ENCODE measurements at regions of chr17 and their contacts with region 1.

Region 1: DNA sequence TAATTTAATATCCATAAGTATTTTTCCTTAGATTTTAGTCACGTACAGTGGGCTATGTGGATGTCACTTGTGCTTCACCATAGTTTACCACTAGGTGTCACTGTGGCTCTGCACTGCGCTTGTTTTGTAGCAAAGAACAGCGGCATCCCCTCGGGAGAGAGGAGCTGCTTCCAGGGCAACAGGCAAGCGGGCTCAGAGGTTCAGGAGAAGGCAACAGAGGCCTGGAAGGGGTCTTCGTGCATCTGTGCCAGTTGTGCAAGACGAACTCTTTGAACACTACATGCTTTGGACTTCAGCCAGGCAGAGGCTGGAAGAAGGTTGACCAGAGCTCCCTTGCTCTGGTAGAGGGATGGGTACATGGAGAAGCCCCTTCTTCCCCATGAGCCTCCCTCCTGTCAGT is 20.6 kb downstream of the CYB561 start:
- DNase-seq: peak; percentile 75
- ATAC-seq: peak; percentile 91

Region 2: DNA sequence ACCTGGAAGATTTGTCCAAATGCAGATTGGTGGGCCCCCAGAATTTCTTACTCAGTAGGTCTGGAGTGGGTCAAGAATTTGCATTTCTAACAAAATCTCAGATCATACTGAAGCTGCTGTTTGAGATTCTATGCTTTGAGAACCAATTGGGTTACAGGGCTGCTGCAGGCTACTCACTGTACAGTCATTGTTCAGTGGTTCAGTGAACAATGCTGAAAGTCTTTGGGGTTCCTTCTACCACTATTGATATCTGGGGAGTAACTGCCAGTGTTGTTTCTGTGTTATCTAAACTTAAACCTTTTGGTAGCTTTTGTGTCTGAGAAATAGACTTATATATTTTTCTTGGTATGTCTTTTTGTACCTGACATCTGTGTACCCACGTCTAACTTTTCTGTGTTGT is 272.0 kb before region 1 on chr17:
- intact Hi-C with region 1: no loop called
- DNase-seq: no peak
- ATAC-seq: no peak

Region 3: DNA sequence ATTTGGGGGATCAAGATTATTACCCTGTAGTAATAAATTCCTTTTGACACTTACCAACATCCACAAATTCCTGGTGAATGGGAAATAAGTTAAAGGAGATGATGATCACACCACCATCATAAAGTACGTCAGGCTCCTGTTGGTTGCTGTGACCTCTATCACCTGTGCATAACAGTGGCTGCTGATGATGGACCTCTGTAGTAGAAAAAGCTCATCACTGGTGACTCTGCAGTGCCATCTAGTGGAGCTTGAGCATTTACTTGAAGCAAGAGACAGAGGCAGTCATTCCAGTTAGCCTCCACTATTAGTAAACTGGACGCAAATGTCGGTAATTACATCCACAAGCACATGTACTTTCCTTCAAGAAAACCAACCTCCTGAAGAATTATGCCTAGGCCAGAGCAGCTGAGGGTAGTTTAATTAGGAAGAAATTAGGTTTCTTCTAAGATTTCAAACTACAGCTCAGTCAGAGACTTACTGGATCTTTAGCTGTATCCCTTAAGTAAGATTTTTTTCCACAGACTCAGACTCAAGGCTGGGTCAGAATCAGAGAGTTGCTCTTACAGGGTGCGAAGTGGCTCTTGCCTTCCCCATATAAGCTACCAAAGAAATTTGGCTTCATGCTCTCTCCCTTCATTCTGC is 18.7 kb before region 1 on chr17:
- intact Hi-C with region 1: no loop called
- DNase-seq: no peak
- ATAC-seq: peak; percentile 84

Region 4: GRCh38 chr17:63445065-63445978 is 19.8 kb after region 1 on chr17:
- intact Hi-C with region 1: no loop called
- DNase-seq: peak; percentile 40
- ATAC-seq: no peak

Region 5: DNA sequence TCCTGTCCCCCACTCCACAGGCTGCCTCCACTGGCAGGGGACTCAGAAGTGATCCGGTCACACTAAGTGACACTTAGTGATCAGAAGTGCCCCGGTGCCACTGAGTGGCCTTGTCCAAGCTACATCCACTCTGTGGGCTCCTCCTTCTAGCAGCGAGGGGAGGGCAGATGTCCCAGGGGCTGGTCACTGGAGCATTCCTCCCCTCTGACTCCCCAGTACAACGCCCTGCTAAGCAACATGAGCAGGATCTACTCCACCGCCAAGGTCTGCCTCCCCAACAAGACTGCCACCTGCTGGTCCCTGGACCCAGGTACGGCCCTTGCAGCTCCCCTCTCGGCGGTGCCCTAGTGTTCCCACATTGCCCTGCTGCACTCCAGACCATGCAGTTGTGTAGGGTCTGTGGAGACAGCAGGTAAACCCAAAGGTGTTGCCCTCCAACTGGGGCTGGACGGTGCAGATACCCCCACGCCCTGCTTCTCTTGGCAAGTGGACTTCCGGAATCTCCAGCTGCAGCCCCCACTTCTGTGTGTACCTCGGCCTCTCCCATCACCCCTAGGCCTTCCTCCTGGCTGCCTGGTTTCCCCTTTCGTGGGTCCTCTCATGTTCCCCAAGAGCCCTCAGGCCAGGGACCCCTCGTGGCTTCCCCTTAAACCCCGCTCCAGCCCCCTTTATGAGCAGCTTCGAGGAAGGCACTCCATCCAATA is 53.5 kb after region 1 on chr17:
- intact Hi-C with region 1: loop called (anchors 5 kb)
- DNase-seq: peak; percentile 83
- ATAC-seq: peak; percentile 85

Region 6: DNA sequence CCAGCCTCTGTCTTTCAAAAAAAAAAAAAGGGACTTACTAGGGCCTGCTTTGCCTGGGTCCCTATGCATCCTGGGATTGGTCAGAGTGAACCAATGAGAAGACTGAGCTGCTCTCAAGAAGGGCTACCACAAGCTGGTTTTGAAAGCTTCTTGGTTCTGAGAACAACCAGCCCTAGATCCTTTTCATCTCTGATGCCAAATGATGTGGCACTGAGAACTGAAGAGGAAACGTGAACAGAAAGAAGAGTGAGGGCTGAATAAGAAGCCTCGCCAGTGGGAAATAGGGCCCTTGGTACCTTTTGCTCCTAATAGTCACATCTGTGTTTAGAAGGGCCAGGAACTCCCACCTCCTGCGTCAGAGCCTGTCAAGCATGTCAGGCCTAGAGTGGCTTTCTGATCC is 185.9 kb after region 1 on chr17:
- intact Hi-C with region 1: loop called (anchors 5 kb)
- DNase-seq: no peak
- ATAC-seq: no peak

Measured in left ventricle myocardium superior (tissue), 1 donor.